K562 (cell line): ENCODE measurements at regions of chr7 and their contacts with region 1.

Region 1: GRCh38 chr7:74299401-74299800 is 10.2 kb downstream of the CLIP2 start:
- DNase-seq: peak in 1 of 4 experiments; percentile 12
- ATAC-seq: no peak
- H3K4me3 ChIP-seq: no peak overlapping the region
- H3K27ac ChIP-seq: no peak overlapping the region
- H3K4me1 ChIP-seq: peaks cover 0 to 18% of the 10 kb centered on the region in 2 experiments; a peak in 3 of 5 replicates
- H3K27me3 ChIP-seq: peaks cover 0 to 9% of the 10 kb centered on the region in 2 experiments; a peak in 2 of 5 replicates
- CTCF ChIP-seq: no peak
- EP300 ChIP-seq: no peak
- POLR2A ChIP-seq: no peak
- RAD21 ChIP-seq: no peak

Region 2: GRCh38 chr7:73423519-73424488 is 875.6 kb before region 1 on chr7:
- CTCF ChIA-PET with region 1: no interaction called
- POLR2A ChIA-PET with region 1: no interaction called
- in situ Hi-C with region 1: no loop called
- intact Hi-C with region 1: no loop called
- DNase-seq: no peak
- ATAC-seq: peak; percentile 52
- H3K4me3 ChIP-seq: no peak overlapping the region
- H3K27ac ChIP-seq: no peak overlapping the region
- H3K4me1 ChIP-seq: peaks cover 0 to 19% of the 10 kb centered on the region in 2 experiments; a peak in 2 of 5 replicates
- H3K27me3 ChIP-seq: peaks cover 30 to 60% of the 10 kb centered on the region in 2 experiments
- CTCF ChIP-seq: no peak
- EP300 ChIP-seq: no peak
- POLR2A ChIP-seq: no peak
- RAD21 ChIP-seq: no peak

Region 3: GRCh38 chr7:74262639-74263398 is 36.6 kb before region 1 on chr7:
- CTCF ChIA-PET with region 1: no interaction called
- POLR2A ChIA-PET with region 1: no interaction called
- in situ Hi-C with region 1: loop called (anchors 5 kb)
- intact Hi-C with region 1: no loop called
- DNase-seq: peak in 1 of 4 experiments; percentile 4
- ATAC-seq: no peak
- H3K4me3 ChIP-seq: no peak overlapping the region
- H3K27ac ChIP-seq: no peak overlapping the region
- H3K4me1 ChIP-seq: peaks cover 0 to 3% of the 10 kb centered on the region in 2 experiments; a peak in 2 of 5 replicates
- H3K27me3 ChIP-seq: no peaks in the 10 kb centered on the region; a peak in 1 of 5 replicates
- CTCF ChIP-seq: no peak
- EP300 ChIP-seq: no peak
- POLR2A ChIP-seq: no peak
- RAD21 ChIP-seq: no peak